Right ventricle myocardium superior (tissue), 1 donor: ENCODE measurements at regions of chr7 and their contacts with region 1.

Region 1: GRCh38 chr7:2232766-2233520 is at the start of gene MAD1L1:
- DNase-seq: peak; percentile 94
- ATAC-seq: peak; percentile 97
- total RNA-seq, gene MAD1L1: 17.9 TPM

Region 2: DNA sequence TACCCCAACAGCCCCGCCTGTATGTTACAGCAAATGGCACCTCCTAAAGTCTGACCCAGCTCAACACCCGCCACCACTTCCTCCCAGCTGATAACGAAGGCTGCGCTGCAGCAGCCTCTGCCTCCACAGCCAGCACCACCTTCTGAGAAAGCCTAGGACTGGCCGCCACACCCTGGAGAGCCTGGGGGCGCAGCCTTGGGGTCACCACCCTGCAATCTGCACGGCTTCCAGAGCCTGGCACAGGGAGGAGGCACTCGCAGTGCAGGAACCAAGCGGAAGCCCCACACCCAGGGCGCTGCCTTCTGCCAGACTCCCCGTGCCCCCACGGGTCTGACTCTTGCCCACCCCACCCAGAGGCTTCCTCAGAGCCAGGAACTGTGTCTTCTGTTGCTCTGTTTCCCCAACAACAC is 112.7 kb before region 1 on chr7:
- intact Hi-C with region 1: no loop called
- DNase-seq: peak; percentile 43
- ATAC-seq: no peak

Region 3: GRCh38 chr7:2314209-2314955 is 81.4 kb after region 1 on chr7 and contains the start of gene SNX8:
- intact Hi-C with region 1: loop called (anchors 5 kb)
- DNase-seq: peak; percentile 93
- ATAC-seq: peak; percentile 99
- total RNA-seq, gene SNX8: 19.1 TPM